A673 (cell line): ENCODE measurements at regions of chr17 and their contacts with region 1.

Region 1: GRCh38 chr17:38557836-38558727 is 47.7 kb downstream of the SRCIN1 start:
- DNase-seq: peak; percentile 91
- H3K4me3 ChIP-seq: peak overlapping the region; percentile 44
- H3K27ac ChIP-seq: no peak overlapping the region
- H3K4me1 ChIP-seq: peaks cover 8% of the 10 kb centered on the region
- H3K27me3 ChIP-seq: no peaks in the 10 kb centered on the region
- CTCF ChIP-seq: peak; percentile 82

Region 2: GRCh38 chr17:38498186-38498752 is 59.8 kb before region 1 on chr17:
- CTCF ChIA-PET with region 1: no interaction called
- POLR2A ChIA-PET with region 1: no interaction called
- intact Hi-C with region 1: no loop called
- DNase-seq: no peak
- H3K4me3 ChIP-seq: no peak overlapping the region
- H3K27ac ChIP-seq: no peak overlapping the region
- H3K4me1 ChIP-seq: no peaks in the 10 kb centered on the region
- H3K27me3 ChIP-seq: no peaks in the 10 kb centered on the region
- CTCF ChIP-seq: no peak

Region 3: DNA sequence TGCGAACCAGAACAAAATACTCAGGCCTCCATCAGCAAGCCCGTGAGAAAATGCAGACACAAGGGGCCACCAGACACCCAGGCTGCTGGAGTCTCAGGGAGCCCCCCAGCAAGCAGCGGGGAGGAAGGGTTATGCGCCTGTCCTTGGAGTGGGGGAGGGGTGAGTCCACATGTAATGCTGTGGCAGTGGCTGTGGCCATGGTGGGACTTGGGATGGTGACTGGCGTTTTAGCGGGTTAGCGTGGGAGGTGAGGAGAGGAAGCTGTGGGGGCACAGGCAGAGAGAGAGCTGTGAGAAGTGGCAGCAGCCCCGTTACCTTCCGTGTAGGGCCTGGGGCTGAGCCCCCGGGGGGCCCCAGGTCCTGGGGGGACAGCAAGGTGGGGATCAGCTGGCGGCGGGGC is 10.6 kb before region 1 on chr17:
- CTCF ChIA-PET with region 1: interaction called, 10 read pairs
- POLR2A ChIA-PET with region 1: no interaction called
- intact Hi-C with region 1: no loop called
- DNase-seq: no peak
- H3K4me3 ChIP-seq: no peak overlapping the region
- H3K27ac ChIP-seq: no peak overlapping the region
- H3K4me1 ChIP-seq: no peaks in the 10 kb centered on the region
- H3K27me3 ChIP-seq: no peaks in the 10 kb centered on the region
- CTCF ChIP-seq: no peak

Region 4: DNA sequence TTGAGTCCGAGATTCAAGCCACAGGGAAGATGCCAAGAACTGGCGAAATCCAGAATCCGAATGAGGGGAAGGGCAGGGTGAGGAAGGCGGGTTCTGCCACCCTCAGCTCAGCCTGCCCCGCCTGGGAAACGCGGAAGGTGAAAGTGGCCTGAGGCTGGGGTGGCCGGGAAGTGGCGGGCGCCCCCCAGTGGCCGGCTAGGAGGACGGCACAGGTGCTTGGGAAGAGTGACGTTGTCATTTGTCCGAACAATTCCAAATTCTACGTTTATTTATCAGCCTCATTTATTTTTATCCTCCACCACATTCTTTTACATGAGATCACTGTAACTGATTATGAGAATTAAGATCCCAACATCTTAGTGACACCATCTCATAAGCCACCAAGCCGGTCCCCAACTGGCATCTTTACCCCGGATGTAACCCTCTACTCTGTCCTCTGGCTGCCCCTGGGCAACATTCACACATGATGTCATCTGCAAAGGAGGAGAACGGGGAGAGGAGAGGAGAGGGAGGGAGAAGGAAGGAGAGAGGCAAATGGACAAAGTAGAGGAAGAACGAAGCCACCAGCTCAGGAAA is 26.4 kb after region 1 on chr17:
- CTCF ChIA-PET with region 1: interaction called, 16 read pairs
- POLR2A ChIA-PET with region 1: no interaction called
- intact Hi-C with region 1: no loop called
- DNase-seq: peak; percentile 56
- H3K4me3 ChIP-seq: no peak overlapping the region
- H3K27ac ChIP-seq: no peak overlapping the region
- H3K4me1 ChIP-seq: no peaks in the 10 kb centered on the region
- H3K27me3 ChIP-seq: no peaks in the 10 kb centered on the region
- CTCF ChIP-seq: peak; percentile 81

Region 5: DNA sequence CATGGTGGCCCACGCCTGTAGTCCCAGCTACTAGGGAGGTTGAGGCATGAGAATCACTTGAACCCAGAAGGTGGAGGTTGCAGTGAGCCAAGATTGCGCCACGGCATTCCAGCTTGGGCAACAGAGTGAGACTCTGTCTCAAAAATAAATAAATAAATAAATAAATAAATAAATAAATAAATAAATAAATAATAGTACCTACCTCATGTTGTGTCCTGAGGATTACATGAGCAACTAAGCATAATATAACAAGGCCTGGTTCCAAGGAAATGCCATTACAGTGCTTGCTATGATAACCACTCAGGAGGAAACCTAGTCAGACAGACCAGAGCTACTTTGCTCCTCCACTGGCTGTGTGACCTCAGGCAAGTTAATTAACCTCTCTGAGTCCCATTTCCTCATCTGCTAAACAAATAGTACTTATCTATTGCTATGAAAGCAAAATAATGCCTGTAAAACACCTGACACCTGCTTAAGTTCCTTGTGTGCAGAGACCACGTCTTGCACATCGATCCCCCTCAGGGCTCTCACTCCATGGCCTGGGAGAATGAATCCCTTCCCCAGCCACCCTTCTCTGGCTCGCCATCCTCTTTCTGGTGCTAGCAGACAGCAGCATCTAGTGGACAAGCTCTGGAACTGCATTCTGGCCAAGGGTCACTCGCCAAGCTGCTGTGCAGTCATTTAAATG is 109.2 kb after region 1 on chr17:
- CTCF ChIA-PET with region 1: interaction called, 19 read pairs
- POLR2A ChIA-PET with region 1: no interaction called
- intact Hi-C with region 1: loop called (anchors 5 kb)
- DNase-seq: peak; percentile 64
- H3K4me3 ChIP-seq: no peak overlapping the region
- H3K27ac ChIP-seq: no peak overlapping the region
- H3K4me1 ChIP-seq: no peaks in the 10 kb centered on the region
- H3K27me3 ChIP-seq: peaks cover 4% of the 10 kb centered on the region
- CTCF ChIP-seq: peak; percentile 86